ENCODE measurements at regions of chr1 and their contacts with region 1.

Region 1: DNA sequence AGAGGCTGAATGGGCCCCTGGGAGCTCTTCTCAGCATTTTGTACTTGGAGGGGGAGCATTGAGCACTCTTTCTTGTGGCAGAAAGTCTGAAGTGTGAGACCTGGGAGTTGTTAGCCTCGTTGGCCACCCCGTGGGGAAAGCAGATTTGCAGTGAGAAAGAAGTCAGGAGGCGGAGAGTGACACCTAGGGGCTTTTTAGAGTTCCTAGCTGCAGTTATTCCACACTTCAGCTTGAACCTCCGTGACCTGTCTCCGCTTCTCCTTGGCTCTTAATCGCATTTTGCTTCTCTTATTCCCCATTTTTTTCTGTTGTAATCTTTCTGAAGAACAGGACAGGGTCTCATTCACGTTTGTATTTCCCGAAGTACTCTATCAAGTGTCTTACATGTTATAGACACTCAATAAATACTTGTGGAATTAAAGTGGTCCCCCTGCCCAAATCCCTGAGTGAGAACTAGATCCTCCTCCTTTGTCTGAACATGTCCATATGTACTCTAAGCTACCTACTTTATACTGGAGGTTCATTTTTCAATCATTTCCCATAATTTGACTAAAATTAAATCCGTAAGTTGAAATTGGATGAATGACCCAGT is 14.5 kb upstream of the C1orf141 start:
- DNase-seq: no peak
- ATAC-seq: peak; percentile 95
- H3K4me3 ChIP-seq: no peak overlapping the region
- H3K27ac ChIP-seq: no peak overlapping the region
- H3K4me1 ChIP-seq: peaks cover 9% of the 10 kb centered on the region
- H3K27me3 ChIP-seq: no peaks in the 10 kb centered on the region
- CTCF ChIP-seq: peak; percentile 71

Region 2: DNA sequence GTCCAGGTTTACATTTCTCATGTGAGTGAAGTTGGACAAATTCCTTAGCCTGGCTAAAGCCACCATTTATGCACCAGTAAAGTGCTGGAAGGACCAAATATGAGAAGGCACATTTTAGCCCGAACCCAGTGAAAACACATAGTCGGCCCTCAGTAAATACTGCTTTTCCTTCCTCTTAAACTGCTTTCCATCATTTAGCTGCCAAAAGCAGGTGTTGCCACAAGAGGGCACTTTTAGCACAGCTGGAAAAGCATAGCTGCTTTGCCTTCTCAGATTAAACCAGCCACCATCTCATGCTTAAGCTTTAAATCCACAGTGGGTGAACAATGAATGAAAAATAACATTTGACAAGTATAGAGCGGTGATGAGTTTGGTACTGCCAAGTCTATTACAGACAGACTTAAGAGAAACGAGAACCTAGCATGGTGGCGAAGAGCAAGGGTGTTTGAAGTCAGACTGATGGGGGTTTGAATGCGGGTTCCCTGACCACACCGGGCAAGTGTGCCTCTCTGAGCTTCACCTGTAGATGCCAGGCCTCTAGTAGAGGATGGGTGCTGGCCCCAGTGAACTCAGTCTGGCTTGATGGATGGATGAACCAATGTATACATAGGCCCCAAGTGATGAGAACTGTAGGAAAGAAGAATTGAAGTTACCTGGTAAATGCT is 153.1 kb before region 1 on chr1:
- intact Hi-C with region 1: loop called (anchors 10 kb)
- DNase-seq: no peak
- ATAC-seq: peak; percentile 89
- H3K4me3 ChIP-seq: no peak overlapping the region
- H3K27ac ChIP-seq: no peak overlapping the region
- H3K4me1 ChIP-seq: peaks cover 5% of the 10 kb centered on the region
- H3K27me3 ChIP-seq: no peaks in the 10 kb centered on the region
- CTCF ChIP-seq: peak; percentile 69

Region 3: DNA sequence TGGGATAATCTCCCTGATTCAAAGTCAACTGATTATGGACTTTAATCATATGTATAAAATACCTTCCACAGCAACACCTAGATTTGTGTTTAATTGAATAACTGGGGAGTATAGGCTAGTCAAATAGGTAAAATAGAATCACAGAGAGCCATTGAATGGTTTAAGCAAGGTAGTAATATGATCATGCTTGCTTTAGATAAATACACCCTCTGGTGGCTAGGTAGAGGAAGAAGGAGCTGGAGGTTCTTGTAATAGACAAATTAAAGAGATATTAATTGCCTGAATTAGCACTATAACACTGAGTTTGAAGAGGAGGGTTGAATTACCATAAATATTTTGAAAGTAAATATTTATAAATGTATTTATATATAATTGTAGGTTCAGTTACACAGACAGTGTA is 860.8 kb after region 1 on chr1:
- intact Hi-C with region 1: no loop called
- DNase-seq: no peak
- ATAC-seq: peak; percentile 41
- H3K4me3 ChIP-seq: no peak overlapping the region
- H3K27ac ChIP-seq: no peak overlapping the region
- H3K4me1 ChIP-seq: no peaks in the 10 kb centered on the region
- H3K27me3 ChIP-seq: no peaks in the 10 kb centered on the region
- CTCF ChIP-seq: peak; percentile 37